ENCODE measurements at regions of chr16 and their contacts with region 1.

Region 1: GRCh38 chr16:66474750-66475199 is 47.7 kb downstream of the BEAN1 start:
- DNase-seq: peak in 1 of 2 experiments; percentile 33
- H3K4me3 ChIP-seq: no peak overlapping the region
- H3K27ac ChIP-seq: no peak overlapping the region
- H3K4me1 ChIP-seq: peaks cover 0 to 7% (median 2%) of the 10 kb centered on the region in 4 experiments; a peak in 4 of 7 replicates
- H3K27me3 ChIP-seq: peaks cover 0 to 3% (median 0%) of the 10 kb centered on the region in 4 experiments; a peak in 1 of 7 replicates
- CTCF ChIP-seq: no peak
- EP300 ChIP-seq: no peak
- POLR2A ChIP-seq: no peak
- RAD21 ChIP-seq: no peak

Region 2: DNA sequence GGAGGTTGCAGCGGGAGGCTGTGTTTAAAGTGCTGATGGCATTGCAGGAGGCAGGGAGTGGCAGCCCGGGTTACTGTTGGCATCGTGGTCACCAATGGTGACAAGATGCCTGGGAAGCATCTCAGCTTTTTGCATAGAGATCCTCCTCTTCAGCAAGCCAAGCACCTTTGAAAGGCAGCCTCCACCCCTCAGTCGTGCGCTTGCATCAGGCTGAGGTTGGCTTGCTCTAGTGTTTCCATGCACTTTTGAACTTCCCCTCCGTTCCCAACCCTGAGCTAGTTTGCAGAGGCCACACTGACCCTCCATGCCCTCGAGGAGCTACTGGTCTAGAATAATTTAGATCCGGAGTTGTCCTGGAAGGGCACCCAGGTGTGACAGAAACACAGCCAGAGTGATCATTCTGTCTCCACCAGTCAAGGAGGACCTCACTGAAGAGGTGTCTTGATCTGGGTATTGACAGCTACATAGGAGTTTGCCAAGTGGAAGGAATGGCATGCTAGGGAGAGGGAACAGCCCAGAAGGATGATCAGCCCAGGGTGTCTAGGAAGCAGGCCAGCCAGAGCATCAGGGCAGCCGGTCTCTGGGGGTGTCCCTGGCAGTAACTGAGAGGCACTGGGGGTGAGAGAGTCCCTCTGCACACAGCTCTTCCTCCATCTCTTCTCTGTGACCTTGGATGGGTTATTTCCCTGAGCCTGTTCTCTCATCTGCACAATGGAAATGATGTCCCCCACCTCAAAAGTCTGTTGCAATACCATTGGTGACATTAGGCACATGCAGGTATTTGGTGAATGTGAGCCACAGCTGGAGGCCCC is 40.0 kb before region 1 on chr16:
- CTCF ChIA-PET with region 1: interaction called, 36 read pairs
- POLR2A ChIA-PET with region 1: interaction called, 3 read pairs
- DNase-seq: no peak
- H3K4me3 ChIP-seq: no peak overlapping the region
- H3K27ac ChIP-seq: no peak overlapping the region
- H3K4me1 ChIP-seq: peaks cover 0 to 13% (median 2%) of the 10 kb centered on the region in 4 experiments; a peak in 3 of 7 replicates
- H3K27me3 ChIP-seq: peaks cover 1 to 14% (median 6%) of the 10 kb centered on the region in 4 experiments
- CTCF ChIP-seq: no peak
- EP300 ChIP-seq: no peak
- POLR2A ChIP-seq: no peak
- RAD21 ChIP-seq: no peak

Region 3: DNA sequence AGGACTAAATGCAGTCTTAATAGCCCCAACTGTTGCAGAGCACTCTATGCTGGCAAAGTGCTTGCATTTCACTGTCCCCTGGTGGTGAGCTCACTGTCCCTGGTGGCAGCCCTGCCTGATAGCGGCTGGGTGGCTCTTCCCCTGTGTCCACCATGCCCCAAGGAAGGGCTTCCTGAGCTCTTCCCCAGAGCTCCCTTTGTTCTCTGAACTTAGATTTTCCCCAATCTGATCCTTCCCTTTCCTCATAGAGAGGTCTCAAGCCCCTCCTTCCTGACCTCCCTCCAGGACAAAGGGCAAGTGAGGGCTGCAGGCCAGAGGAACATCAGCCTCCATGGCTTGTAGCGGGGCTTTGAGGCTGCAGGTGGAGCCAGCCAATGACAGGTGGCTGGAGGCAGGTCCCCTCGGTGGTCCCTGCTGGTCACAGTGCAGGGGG is 30.7 kb before region 1 on chr16:
- CTCF ChIA-PET with region 1: interaction called, 30 read pairs
- POLR2A ChIA-PET with region 1: no interaction called
- DNase-seq: no peak
- H3K4me3 ChIP-seq: no peak overlapping the region
- H3K27ac ChIP-seq: no peak overlapping the region
- H3K4me1 ChIP-seq: peaks cover 0 to 4% (median 0%) of the 10 kb centered on the region in 4 experiments; a peak in 1 of 7 replicates
- H3K27me3 ChIP-seq: peaks cover 0 to 3% (median 0%) of the 10 kb centered on the region in 4 experiments; a peak in 1 of 7 replicates
- CTCF ChIP-seq: peak in 2 of 3 experiments; percentile 21 to 45; a peak in 3 of 4 replicates
- EP300 ChIP-seq: no peak
- POLR2A ChIP-seq: no peak
- RAD21 ChIP-seq: no peak; a peak in 1 of 4 replicates

Region 4: DNA sequence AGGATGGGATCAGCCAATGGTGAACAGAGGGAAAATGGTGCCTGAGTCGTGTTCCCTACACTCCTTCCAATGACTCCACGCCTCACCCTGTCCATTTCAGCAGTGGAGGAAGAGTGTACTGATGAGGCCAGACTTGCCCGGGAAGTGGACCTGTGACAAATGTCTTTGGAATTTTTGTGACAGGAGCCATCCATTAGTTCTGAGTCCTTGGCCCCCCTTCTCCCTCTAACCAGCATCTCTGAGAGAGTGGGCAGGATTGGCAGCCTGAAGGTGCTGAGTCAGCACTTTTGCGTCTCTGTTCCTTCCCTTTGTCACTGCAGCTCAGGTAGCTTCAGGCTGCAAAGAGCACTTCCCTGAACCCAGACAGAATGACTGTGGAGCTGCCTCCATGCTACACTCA is 16.9 kb before region 1 on chr16:
- CTCF ChIA-PET with region 1: interaction called, 26 read pairs
- POLR2A ChIA-PET with region 1: interaction called, 3 read pairs
- DNase-seq: no peak
- H3K4me3 ChIP-seq: no peak overlapping the region
- H3K27ac ChIP-seq: no peak overlapping the region
- H3K4me1 ChIP-seq: peaks cover 0 to 4% (median 1%) of the 10 kb centered on the region in 4 experiments; a peak in 1 of 7 replicates
- H3K27me3 ChIP-seq: no peaks in the 10 kb centered on the region
- CTCF ChIP-seq: no peak
- EP300 ChIP-seq: no peak
- POLR2A ChIP-seq: no peak
- RAD21 ChIP-seq: no peak

Region 5: DNA sequence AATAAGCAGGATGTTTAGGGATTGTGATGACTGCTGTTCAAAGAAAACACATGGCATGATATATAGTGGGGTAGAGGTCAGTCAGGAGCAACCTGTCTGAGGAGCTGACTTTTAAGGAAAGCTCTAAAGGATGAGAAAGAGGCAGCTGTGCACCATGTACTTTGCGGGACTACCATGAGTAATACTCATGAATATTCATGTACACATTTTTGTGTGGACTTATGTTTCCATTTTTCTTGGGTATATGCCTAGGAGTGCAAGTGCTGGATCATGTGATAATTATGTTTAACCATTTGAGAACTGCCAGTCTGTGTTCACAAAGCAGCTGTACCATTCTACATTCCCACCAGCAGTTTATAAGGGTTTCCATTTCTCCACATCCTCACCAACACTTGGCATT is 11.9 kb before region 1 on chr16:
- CTCF ChIA-PET with region 1: interaction called, 26 read pairs
- POLR2A ChIA-PET with region 1: interaction called, 4 read pairs
- DNase-seq: no peak
- H3K4me3 ChIP-seq: no peak overlapping the region
- H3K27ac ChIP-seq: no peak overlapping the region
- H3K4me1 ChIP-seq: peaks cover 0 to 3% (median 1%) of the 10 kb centered on the region in 4 experiments; a peak in 1 of 7 replicates
- H3K27me3 ChIP-seq: no peaks in the 10 kb centered on the region; a peak in 2 of 7 replicates
- CTCF ChIP-seq: no peak
- EP300 ChIP-seq: no peak
- POLR2A ChIP-seq: no peak
- RAD21 ChIP-seq: no peak

Region 6: GRCh38 chr16:66515596-66516510 is 41.1 kb after region 1 on chr16:
- CTCF ChIA-PET with region 1: interaction called, 14 read pairs
- POLR2A ChIA-PET with region 1: interaction called, 3 read pairs
- DNase-seq: peak; percentile 13 to 60
- H3K4me3 ChIP-seq: no peak overlapping the region
- H3K27ac ChIP-seq: no peak overlapping the region
- H3K4me1 ChIP-seq: peaks cover 7 to 19% (median 9%) of the 10 kb centered on the region in 4 experiments; a peak in 6 of 7 replicates
- H3K27me3 ChIP-seq: no peaks in the 10 kb centered on the region
- CTCF ChIP-seq: peak; percentile 51 to 69 (median 67)
- EP300 ChIP-seq: no peak
- POLR2A ChIP-seq: no peak
- RAD21 ChIP-seq: peak; percentile 73 to 86

Region 7: GRCh38 chr16:66588981-66589713 is 114.4 kb after region 1 on chr16:
- CTCF ChIA-PET with region 1: interaction called, 12 read pairs
- POLR2A ChIA-PET with region 1: interaction called, 3 read pairs
- DNase-seq: peak in 1 of 2 experiments; percentile 73
- H3K4me3 ChIP-seq: no peak overlapping the region
- H3K27ac ChIP-seq: no peak overlapping the region
- H3K4me1 ChIP-seq: no peaks in the 10 kb centered on the region
- H3K27me3 ChIP-seq: no peaks in the 10 kb centered on the region
- CTCF ChIP-seq: peak; percentile 89 to 99 (median 94)
- EP300 ChIP-seq: no peak
- POLR2A ChIP-seq: no peak
- RAD21 ChIP-seq: peak; percentile 93 to 94